Colonic mucosa (tissue), 4 donors: ENCODE measurements at regions of chr22 and their contacts with region 1.

Region 1: DNA sequence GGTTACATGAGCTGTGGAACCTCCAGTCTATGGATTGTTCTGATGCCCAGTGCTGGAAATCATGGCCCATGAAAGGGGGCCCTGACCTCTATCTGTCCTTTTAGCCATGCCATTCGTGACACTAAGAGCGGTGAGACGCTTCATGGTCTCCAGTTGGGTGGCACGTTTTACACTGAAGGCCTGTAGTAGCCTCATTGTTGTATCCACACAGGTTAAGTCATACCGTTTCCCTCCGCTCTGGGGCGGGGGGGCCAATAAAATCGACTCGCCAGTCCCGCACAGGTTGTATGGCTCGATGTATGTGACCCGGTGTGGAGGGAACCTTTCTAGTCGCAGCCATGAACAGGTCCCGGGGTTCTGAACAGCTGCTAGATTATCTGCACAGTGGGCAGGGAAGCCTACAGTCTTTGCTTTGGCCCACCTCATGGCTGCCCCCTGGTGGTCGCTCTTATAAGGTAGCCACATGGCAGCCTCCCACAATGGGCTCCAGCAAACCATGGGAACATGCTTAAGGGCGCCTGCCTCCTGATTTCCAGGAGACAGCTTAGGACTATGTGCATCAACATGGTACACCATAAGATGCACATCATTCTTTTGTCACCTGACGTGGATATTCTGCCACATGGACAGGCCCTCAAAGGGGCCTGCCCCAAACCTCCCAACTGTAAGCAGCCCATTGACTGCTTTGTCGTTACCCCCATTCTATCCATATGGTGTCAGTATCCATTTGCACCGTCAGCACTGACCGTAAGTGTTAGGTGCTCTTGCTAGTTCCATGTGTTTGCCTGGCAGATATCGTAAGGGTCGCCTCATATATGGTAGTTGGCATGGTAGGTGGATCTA is 19.7 kb upstream of the APOL3 start:
- DNase-seq: peak; percentile 85
- H3K4me3 ChIP-seq: no peak overlapping the region
- H3K27ac ChIP-seq: no peak overlapping the region
- H3K4me1 ChIP-seq: no peaks in the 10 kb centered on the region
- H3K27me3 ChIP-seq: no peaks in the 10 kb centered on the region
- CTCF ChIP-seq: peak; percentile 87

Region 2: DNA sequence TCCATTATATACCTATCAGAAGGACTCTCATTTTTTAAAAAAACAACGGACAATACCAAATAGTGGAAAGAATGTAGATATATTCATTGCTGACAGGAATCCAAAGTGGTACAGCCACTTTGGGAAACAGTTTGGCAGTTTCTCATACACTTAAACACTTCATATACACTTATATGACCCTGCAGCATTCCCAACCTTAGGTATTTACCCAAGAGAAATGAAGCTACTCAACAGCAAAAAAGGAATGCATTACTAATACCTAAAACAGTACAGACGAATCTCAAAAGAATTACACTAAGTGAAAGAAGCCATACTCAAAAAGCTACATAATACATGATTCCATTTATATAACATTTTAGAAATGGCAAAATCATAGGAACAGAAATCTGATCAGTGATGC is 203.1 kb before region 1 on chr22:
- intact Hi-C with region 1: no loop called
- DNase-seq: no peak
- H3K4me3 ChIP-seq: no peak overlapping the region
- H3K27ac ChIP-seq: no peak overlapping the region
- H3K4me1 ChIP-seq: no peaks in the 10 kb centered on the region
- H3K27me3 ChIP-seq: no peaks in the 10 kb centered on the region
- CTCF ChIP-seq: no peak

Region 3: GRCh38 chr22:36046141-36046540 is 134.1 kb before region 1 on chr22:
- intact Hi-C with region 1: no loop called
- DNase-seq: no peak
- H3K4me3 ChIP-seq: no peak overlapping the region
- H3K27ac ChIP-seq: no peak overlapping the region
- H3K4me1 ChIP-seq: no peaks in the 10 kb centered on the region
- H3K27me3 ChIP-seq: no peaks in the 10 kb centered on the region
- CTCF ChIP-seq: no peak

Region 4: GRCh38 chr22:36145881-36146280 is 34.4 kb before region 1 on chr22:
- intact Hi-C with region 1: loop called (anchors 2 kb)
- DNase-seq: no peak
- H3K4me3 ChIP-seq: no peak overlapping the region
- H3K27ac ChIP-seq: no peak overlapping the region
- H3K4me1 ChIP-seq: no peaks in the 10 kb centered on the region
- H3K27me3 ChIP-seq: no peaks in the 10 kb centered on the region
- CTCF ChIP-seq: no peak